Head of caudate nucleus (tissue), 42 donors: ENCODE measurements at regions of chr9 and their contacts with region 1.

Region 1: GRCh38 chr9:113221003-113221799 is at the starts of genes FKBP15 and SLC31A1:
- DNase-seq: peak; percentile 96 to 99 (median 99)

Region 2: DNA sequence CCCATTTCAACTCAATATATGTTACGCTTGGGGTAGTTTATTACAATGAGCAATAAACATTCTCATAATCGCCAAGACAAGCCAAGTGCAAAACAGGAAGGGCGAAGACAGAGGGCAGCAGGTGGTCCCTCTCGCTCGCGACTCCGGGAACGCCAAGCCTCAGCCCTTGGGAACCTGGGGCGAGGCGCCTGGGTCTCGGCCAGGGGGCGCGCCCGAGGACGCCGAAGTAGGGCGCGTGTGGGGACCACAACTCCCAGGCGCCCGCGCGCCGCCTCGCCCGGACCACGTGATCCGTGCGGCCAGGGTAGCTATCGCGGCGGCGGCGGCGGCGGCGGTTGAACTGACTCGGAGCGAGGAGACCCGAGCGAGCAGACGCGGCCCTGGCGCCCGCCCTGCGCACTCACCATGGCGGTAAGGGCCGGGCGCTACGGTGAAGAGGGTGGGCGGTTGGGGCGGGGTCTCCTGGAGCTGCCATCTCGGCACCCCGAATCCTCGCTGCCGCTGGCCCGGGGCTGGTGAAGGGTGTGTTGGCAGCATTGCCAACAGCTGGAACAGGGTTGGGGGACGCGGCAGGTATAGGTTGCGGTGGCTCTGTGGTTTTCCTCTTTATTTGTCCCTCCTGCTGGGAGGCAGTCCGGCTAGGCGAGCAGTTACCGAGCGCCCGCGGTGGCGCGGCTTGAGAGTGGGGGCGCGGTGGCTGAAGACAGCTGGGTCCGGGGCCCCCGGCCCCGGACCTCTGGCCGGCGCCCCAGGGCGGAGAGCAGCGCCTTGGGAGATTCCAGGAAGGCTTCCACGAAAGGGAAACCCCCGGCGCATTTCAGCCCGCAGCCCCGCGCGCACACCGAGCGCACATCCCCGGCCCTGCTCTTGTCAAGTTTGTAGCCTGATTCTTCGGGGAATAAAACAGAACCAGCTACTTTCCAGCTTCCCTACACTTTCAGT is 70.3 kb before region 1 on chr9 and contains the start of gene SLC31A2:
- intact Hi-C with region 1: loop called (anchors 2 kb)
- DNase-seq: peak; percentile 80 to 98 (median 95)

Region 3: DNA sequence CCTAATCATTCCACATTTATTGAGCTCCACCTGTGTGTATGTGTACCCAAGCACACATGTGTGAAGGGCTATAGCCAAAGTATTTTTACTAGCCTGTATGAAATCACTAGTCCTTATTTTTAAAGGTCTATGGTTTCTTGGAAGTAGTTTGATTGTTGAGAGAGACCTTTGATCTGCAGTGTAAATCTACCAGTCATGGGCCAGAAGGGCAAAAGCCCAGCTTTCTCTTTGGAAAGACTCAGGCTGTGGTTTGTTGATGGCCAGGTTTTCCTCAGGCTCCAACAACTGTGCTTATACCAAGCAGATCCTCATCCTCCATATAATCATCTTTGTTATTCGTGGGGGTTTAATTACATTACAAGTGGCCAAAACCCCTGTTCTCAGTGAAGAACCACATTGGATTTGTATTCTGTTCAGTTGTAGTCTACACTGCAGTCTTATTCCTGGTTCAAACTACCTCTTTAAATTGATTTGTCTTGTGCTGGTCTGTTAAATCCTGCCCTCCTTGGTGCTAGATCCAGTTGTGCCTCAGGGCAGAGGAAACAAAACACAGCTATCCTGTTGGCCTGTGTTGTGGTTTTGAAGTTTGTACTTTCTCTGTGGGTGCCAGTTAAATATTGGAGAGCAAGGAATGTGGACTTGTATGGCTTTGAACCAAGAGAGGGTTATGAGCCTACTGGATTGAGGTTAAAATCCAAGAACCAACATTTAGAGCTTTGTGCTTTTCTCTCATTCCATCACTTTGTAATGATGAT is 40.9 kb after region 1 on chr9:
- intact Hi-C with region 1: no loop called
- DNase-seq: no peak

Region 4: DNA sequence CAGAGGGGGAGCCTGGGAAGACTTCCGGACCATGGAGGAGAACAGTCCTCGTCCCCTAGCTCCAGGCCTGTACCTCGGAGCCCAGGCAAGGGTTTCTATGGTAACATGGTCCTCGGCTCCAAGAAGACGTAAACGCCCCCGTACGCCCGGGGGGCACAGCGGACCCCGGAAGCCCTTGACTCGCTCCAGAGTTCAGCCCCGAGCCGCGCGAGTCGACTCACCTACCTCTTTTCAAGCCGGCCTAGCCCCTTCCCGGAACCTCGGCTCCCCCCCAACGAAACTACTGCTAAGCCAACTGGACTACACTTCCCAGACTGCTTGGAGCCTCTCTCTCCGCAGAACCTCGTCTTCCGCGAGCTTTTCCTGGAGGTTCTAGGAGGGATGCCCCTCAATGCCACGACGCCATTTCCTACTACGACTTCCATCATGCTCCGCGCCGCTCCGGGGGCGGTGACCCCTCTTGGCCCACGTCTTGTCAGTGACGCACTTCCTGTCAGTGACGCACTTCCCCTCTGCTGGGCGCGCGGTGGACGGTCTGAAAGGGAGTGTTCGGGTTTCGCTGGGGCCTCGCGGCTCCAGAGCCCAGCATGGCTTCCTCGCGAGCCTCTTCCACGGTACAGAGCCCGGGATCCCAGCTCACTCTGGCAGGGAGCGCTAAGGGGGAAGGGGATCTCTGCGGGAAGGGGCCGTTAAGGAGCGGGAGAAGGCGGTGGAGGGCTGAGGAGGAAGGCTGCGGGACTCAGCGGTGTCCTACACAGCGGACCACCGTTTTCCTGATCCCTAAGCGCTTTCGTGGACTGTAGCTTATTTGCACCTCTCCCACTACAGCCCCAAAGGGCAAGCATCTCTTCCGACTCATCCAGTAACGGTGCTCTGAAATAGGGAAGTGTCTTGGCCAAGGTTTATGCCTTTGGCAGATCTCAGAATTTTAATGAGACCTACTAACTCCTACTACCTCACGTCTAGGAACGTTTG is 54.2 kb after region 1 on chr9 and contains the starts of genes CDC26 and PRPF4:
- intact Hi-C with region 1: loop called (anchors 2 kb)
- DNase-seq: peak; percentile 92 to 99 (median 98)

Region 5: GRCh38 chr9:113410207-113410864 is 189.1 kb after region 1 on chr9 and contains the starts of genes C9orf43 and POLE3:
- intact Hi-C with region 1: loop called (anchors 5 kb)
- DNase-seq: peak; percentile 89 to 97 (median 94)

Region 6: DNA sequence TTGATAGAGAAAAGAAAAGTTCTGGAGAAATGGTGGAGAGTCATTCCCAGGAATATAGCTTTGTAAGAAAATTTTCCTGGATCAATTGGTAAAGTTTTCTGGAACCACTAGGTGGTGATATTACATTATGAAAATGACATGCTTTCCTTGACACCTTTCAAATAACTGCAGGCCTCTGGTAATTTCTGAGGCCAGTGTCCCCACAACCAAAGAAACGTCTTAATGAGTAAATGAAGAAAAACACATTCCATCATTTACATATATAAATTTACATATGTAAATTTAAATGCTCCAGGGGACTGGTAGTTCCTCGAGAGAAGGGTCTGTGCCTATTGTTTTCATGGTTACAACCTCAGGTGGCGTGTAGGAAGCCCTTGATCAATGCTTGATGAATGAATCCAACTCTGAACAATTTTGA is 225.1 kb after region 1 on chr9:
- intact Hi-C with region 1: no loop called
- DNase-seq: peak in 4 of 42 donors; percentile 15 to 41 (median 21)

Region 7: DNA sequence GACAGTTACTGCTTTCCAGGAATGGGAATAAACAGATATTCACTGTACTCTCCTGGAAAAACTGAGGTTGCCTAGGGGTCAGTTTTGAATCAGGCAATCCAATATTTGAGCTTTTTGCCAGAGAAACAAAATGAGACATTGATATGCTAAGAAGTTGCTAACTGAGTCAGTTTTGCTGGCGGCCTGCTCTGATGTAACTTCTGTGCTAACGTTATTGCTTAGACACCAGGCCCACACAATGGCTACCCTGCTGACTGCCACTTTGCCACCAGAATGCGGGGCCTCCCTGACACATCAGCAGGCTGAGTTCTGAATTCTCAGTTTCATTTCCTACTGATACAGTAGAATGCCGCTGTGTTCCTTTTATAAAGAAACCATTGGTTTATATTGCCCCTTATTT is 636.7 kb after region 1 on chr9:
- intact Hi-C with region 1: no loop called
- DNase-seq: peak in 24 of 42 donors; percentile 7 to 73 (median 28)